CD4-positive, alpha-beta T cell (primary cell): ENCODE measurements at regions of chr1 and their contacts with region 1.

Region 1: DNA sequence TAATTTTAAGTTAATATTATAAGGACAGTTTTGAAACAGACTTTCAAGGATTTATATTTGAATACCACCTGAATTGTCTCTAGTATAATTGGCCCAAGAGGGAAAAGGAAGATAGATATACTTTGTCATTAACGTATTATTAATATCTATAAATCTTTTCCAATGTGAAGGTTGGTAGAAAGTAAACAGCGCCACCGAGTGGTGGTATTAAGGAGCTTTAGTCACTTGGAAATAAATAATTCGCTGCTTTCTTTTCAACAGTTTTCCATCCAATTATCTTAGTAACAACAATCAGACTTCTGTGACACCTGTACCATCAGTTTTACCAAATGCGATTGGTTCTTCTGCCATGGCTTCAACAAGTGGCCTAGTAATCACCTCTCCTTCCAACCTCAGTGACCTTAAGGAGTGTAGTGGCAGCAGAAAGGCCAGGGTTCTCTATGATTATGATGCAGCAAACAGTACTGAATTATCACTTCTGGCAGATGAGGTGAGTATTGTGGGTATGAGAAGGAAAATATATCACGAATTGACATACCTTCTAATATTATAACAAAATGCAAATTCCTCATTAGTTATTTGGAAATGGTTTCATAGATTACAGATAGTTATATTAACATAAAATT is 37.7 kb downstream of the SH3GLB1 start:
- DNase-seq: peak in 12 of 14 experiments; percentile 13 to 74 (median 30)
- ATAC-seq: no peak
- H3K4me3 ChIP-seq: no peak overlapping the region
- H3K4me3 Mint-ChIP-seq: no peak overlapping the region
- H3K27ac ChIP-seq: no peak overlapping the region
- H3K27ac Mint-ChIP-seq: no peak overlapping the region
- H3K4me1 ChIP-seq: peaks cover 7% of the 10 kb centered on the region
- H3K4me1 Mint-ChIP-seq: peaks cover 4% of the 10 kb centered on the region
- H3K27me3 ChIP-seq: no peaks in the 10 kb centered on the region
- H3K27me3 Mint-ChIP-seq: no peaks in the 10 kb centered on the region
- CTCF ChIP-seq: peak; percentile 75

Region 2: DNA sequence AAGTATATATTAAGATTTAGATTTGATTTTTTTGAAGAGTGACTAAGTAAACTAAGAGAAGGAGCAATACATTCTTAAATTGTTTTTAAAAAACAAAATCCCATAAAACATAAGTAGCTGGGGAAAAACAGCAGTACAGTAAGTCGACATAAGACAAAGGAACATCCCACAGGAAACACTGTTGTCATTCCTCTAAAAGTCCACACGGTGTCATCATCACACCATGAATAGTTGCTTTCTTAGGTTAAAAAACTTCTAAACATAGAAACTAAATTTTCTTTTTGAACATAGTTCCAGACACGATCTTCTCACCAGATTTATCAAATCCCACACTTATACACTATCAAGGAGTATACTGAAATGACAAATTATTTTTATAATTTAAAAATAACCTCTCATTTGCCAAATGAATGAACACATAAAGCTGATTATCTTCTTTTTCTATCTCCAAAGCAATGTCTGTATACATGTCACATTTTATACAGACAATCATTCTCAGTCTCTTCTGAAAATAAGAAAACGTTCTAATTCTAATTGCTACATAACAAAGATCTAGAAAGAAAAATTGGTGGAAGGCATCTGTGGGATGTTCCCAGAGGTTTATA is 361.7 kb before region 1 on chr1:
- CTCF ChIA-PET with region 1: interaction called, 4 read pairs
- POLR2A ChIA-PET with region 1: no interaction called
- intact Hi-C with region 1: loop called (anchors 2 to 5 kb)
- DNase-seq: peak in 4 of 14 experiments; percentile 38 to 80 (median 72)
- ATAC-seq: peak; percentile 86
- H3K4me3 ChIP-seq: no peak overlapping the region
- H3K4me3 Mint-ChIP-seq: no peak overlapping the region
- H3K27ac ChIP-seq: no peak overlapping the region
- H3K27ac Mint-ChIP-seq: peak overlapping the region; percentile 69
- H3K4me1 ChIP-seq: no peaks in the 10 kb centered on the region
- H3K4me1 Mint-ChIP-seq: peaks cover 29% of the 10 kb centered on the region
- H3K27me3 ChIP-seq: no peaks in the 10 kb centered on the region
- H3K27me3 Mint-ChIP-seq: no peaks in the 10 kb centered on the region
- CTCF ChIP-seq: peak; percentile 95

Region 3: DNA sequence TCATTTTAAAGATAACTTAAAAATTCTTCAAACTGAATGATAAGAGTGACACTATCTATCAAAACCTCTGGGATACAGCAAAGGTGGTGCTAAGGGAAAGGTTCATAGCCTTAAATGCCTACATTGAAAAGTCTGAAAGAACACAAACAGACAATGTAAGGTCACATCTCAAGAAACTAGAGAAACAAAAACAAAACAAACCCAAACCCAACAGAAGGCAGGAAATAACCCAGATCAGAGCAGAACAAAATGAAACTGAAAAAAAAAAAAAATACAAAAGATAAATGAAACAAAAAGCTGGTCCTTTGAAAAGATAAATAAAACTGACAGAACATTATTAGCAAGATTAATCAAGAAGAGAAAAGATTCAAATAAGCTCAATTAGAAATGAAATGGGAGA is 352.8 kb before region 1 on chr1:
- CTCF ChIA-PET with region 1: no interaction called
- POLR2A ChIA-PET with region 1: no interaction called
- intact Hi-C with region 1: loop called in 1 of 2 experiments (anchors 5 kb)
- DNase-seq: peak in 3 of 14 experiments; percentile 50 to 70 (median 54)
- ATAC-seq: peak; percentile 80
- H3K4me3 ChIP-seq: peak overlapping the region; percentile 37
- H3K4me3 Mint-ChIP-seq: peak overlapping the region; percentile 77
- H3K27ac ChIP-seq: peak overlapping the region; percentile 8 to 73
- H3K27ac Mint-ChIP-seq: peak overlapping the region; percentile 78
- H3K4me1 ChIP-seq: peaks cover 4% of the 10 kb centered on the region
- H3K4me1 Mint-ChIP-seq: peaks cover 68% of the 10 kb centered on the region
- H3K27me3 ChIP-seq: no peaks in the 10 kb centered on the region
- H3K27me3 Mint-ChIP-seq: no peaks in the 10 kb centered on the region
- CTCF ChIP-seq: no peak

Region 4: DNA sequence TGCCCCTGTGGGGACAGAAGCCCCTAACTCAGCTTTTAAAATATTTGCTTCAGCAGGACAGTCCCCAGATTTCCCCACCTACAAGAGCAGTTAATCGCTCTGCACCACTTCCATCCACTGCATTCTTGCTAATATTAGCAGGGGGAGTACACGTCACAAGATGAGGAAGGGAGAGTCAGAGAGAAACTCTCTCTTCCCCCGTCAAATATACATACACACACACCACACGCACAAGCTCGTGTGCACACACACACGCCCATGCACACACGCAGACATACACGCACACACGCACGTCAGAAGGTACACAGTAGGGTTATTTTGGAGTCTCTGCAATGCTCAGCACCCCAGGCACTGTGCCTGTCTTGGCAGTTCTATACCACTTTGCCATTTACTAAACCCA is 271.2 kb before region 1 on chr1:
- CTCF ChIA-PET with region 1: interaction called, 3 read pairs
- POLR2A ChIA-PET with region 1: no interaction called
- intact Hi-C with region 1: loop called in 1 of 2 experiments (anchors 2 kb)
- DNase-seq: no peak
- ATAC-seq: no peak
- H3K4me3 ChIP-seq: no peak overlapping the region
- H3K4me3 Mint-ChIP-seq: no peak overlapping the region
- H3K27ac ChIP-seq: no peak overlapping the region
- H3K27ac Mint-ChIP-seq: no peak overlapping the region
- H3K4me1 ChIP-seq: no peaks in the 10 kb centered on the region
- H3K4me1 Mint-ChIP-seq: no peaks in the 10 kb centered on the region
- H3K27me3 ChIP-seq: peaks cover 0 to 5% of the 10 kb centered on the region in 2 experiments
- H3K27me3 Mint-ChIP-seq: peaks cover 8% of the 10 kb centered on the region
- CTCF ChIP-seq: no peak

Region 5: GRCh38 chr1:86499987-86500593 is 242.0 kb before region 1 on chr1:
- CTCF ChIA-PET with region 1: interaction called, 6 read pairs
- POLR2A ChIA-PET with region 1: no interaction called
- intact Hi-C with region 1: loop called (anchors 2 to 5 kb)
- DNase-seq: peak in 3 of 14 experiments; percentile 55 to 79 (median 57)
- ATAC-seq: peak; percentile 61
- H3K4me3 ChIP-seq: no peak overlapping the region
- H3K4me3 Mint-ChIP-seq: no peak overlapping the region
- H3K27ac ChIP-seq: no peak overlapping the region
- H3K27ac Mint-ChIP-seq: no peak overlapping the region
- H3K4me1 ChIP-seq: peaks cover 7% of the 10 kb centered on the region
- H3K4me1 Mint-ChIP-seq: peaks cover 17% of the 10 kb centered on the region
- H3K27me3 ChIP-seq: peaks cover 0 to 3% of the 10 kb centered on the region in 2 experiments
- H3K27me3 Mint-ChIP-seq: peaks cover 23% of the 10 kb centered on the region
- CTCF ChIP-seq: peak; percentile 100

Region 6: GRCh38 chr1:86666368-86666767 is 75.7 kb before region 1 on chr1:
- CTCF ChIA-PET with region 1: no interaction called
- POLR2A ChIA-PET with region 1: no interaction called
- intact Hi-C with region 1: no loop called
- DNase-seq: no peak
- ATAC-seq: no peak
- H3K4me3 ChIP-seq: no peak overlapping the region
- H3K4me3 Mint-ChIP-seq: no peak overlapping the region
- H3K27ac ChIP-seq: no peak overlapping the region
- H3K27ac Mint-ChIP-seq: no peak overlapping the region
- H3K4me1 ChIP-seq: no peaks in the 10 kb centered on the region
- H3K4me1 Mint-ChIP-seq: no peaks in the 10 kb centered on the region
- H3K27me3 ChIP-seq: no peaks in the 10 kb centered on the region
- H3K27me3 Mint-ChIP-seq: no peaks in the 10 kb centered on the region
- CTCF ChIP-seq: no peak